ENCODE measurements at regions of chr17 and their contacts with region 1.

Region 1: DNA sequence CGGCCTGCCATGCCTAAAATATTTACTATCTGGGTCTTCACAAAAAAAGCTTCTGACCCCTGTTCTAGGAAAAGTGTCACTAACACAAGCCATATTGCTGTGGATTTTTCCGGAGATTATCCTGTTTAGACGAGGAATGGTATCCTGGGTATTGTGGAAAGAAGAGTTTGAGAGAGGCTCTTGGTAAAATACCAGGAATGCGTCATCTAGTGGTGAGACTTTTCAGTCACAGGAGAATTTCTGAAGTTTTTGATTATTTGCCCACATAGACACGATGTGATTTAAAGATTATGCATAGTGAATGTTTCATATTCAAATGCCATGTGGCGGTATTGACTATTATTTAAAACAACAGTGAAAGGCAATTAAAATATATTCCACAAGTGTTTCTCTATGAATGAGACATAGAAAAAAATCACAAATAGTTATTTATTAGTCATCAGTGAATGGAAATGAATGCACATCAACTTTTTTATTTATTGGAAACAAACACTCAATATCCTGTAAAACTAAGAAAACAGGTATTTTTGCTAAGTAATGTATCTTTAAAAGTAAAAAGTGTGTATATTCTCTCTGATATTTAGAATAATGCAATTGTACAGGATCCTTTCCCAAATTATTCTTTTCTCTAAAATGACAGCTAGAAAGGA is 7.8 kb downstream of the KRT28 start:
- DNase-seq: no peak
- ATAC-seq: no peak
- H3K4me3 ChIP-seq: no peak overlapping the region
- H3K27ac ChIP-seq: no peak overlapping the region
- H3K4me1 ChIP-seq: no peaks in the 10 kb centered on the region
- H3K27me3 ChIP-seq: no peaks in the 10 kb centered on the region
- CTCF ChIP-seq: peak in 6 of 7 experiments; percentile 30 to 62 (median 56)
- POLR2A ChIP-seq: no peak

Region 2: DNA sequence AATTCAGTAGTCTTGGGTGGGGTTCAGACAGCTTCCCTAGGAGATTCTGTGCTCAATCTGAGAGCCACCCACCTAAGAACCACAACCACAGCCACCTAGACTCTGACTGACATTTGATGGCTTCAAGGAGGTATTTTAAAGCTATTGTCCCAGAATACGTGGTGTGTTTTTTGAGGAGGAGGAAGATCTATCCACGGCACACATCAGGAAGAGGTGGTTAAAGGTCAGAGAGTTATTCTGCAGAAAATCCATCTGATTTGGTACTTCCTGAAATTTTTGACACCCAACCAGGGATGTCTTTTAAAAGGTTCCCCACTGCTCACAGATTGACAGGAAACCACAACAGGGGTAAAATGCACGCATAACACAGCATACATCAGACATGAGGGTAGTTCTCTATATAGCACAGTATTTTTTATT is 169.4 kb before region 1 on chr17:
- intact Hi-C with region 1: loop called (anchors 5 kb)
- DNase-seq: no peak
- ATAC-seq: no peak
- H3K4me3 ChIP-seq: no peak overlapping the region
- H3K27ac ChIP-seq: no peak overlapping the region
- H3K4me1 ChIP-seq: no peaks in the 10 kb centered on the region
- H3K27me3 ChIP-seq: peaks cover 0 to 4% of the 10 kb centered on the region in 2 donors
- CTCF ChIP-seq: no peak
- POLR2A ChIP-seq: no peak

Region 3: DNA sequence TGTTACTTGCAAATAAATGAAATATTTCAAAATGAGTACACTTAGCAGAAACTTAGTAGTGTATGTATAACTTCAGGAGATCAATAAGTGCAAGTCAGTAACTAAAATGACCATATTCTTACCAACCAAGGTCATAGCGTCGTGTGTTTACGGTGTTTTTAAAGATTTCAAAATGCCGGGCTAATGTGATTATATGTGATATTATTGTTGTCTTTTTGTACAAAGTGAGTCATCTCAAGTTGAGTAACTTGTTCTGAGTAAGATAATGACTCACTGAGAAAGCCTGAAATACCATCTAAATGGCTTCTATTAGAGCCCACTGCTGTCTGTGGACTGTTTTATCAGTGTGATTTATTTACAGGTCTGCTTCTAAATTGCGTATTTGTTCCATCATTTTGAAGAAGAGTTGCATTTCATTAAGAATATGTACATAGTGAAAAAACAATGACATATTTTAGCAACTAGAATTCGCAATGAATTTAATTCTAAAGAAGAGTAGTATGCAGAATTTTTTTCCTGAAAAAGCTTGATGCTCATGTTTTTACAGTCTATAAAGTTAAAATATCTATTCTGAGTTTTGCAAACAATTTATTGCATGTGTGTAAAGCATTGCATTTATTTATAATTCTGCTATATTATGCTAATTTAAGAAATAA is 62.4 kb after region 1 on chr17:
- intact Hi-C with region 1: no loop called
- DNase-seq: no peak
- ATAC-seq: no peak
- H3K4me3 ChIP-seq: no peak overlapping the region
- H3K27ac ChIP-seq: no peak overlapping the region
- H3K4me1 ChIP-seq: peaks cover 5% of the 10 kb centered on the region
- H3K27me3 ChIP-seq: no peaks in the 10 kb centered on the region
- CTCF ChIP-seq: no peak
- POLR2A ChIP-seq: no peak